SK-N-SH (cell line): ENCODE measurements at regions of chr14 and their contacts with region 1.

Region 1: DNA sequence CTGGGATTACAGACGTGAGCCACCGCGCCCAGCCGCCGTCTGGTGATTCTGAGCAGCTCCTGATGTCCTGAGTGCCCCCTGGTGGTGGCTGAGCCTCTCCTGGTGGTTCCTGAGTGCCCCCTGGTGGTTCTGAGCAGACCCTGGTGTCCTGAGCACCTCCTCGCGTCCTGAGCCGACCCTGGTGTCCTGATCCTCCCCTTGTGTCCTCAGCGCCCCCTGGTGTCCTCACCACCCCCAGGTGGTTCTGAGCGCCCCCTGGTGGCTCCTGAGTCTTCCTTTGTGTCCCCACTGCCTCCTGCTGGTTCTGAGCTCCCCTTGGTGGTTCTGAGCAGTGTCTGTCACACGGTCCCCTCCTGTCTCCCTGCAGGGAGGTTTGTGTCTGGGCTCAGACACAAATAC is 1304.9 kb downstream of the TMEM121 start:
- DNase-seq: peak; percentile 28
- H3K4me3 ChIP-seq: no peak overlapping the region
- H3K27ac ChIP-seq: no peak overlapping the region
- H3K4me1 ChIP-seq: no peaks in the 10 kb centered on the region
- H3K27me3 ChIP-seq: 0 out of 2 replicates have a peak, but pooled peaks cover 5% of the 10 kb centered on the region
- CTCF ChIP-seq: peak; percentile 54
- EP300 ChIP-seq: no peak
- RAD21 ChIP-seq: no peak

Region 2: DNA sequence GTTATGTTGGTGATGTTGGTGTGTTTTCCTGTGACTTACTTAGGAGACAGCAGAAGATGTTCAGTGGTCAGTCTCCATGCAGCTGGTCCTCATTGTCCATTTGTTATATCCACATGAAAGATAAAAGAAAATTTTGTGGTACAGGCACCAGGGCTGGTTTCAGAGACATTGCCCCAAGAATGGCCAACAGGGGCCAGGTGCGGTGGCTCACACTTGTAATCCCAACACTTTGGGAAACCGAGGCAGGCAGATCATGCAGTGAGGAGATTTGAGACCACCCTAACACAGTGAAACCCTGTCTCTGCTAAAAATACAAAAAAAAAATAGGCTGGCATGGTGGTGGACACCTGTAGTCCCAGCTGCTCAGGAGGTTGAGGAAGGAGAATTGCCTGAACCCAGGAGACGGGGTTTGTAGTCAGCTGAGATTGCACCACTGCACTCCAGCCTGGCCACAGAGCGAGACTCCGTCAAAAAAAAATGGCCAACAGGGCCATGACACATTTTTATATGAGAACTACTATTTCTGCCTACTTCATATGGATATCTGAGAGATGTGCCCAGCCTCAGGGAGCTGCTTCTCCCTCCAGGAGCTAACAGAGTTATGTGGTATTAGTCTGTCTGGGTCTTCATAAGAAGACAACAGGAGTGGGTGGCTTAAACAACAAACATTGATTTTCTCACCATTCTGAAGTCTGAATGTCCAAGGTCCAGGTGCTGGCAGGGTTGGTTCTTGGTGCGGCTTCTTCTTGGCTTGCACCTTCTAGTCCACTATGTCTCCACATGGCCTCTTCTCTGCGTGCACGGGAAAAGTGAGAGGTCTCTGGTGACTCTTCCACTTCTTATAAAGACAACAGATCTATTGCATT is 483.2 kb before region 1 on chr14:
- CTCF ChIA-PET with region 1: no interaction called
- POLR2A ChIA-PET with region 1: no interaction called
- DNase-seq: no peak
- H3K4me3 ChIP-seq: no peak overlapping the region
- H3K27ac ChIP-seq: no peak overlapping the region
- H3K4me1 ChIP-seq: no peaks in the 10 kb centered on the region
- H3K27me3 ChIP-seq: no peaks in the 10 kb centered on the region
- CTCF ChIP-seq: no peak
- EP300 ChIP-seq: no peak
- RAD21 ChIP-seq: no peak

Region 3: DNA sequence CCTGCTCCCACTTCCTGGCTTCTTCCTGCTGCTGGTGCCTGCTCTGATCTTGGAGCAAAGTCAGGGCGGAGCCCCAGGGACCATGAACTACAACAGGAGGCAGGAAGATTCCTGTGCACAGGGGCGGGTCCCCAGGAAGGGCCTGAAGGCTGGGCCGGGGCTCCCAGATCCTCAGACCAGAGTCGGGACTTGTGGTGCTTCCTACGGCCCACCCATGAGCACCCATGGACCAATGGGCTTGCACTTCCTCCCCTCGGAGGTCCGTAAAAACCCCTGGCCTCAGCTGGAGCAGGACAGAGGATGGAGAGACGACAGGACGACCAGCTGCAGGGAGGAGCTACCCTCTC is 17.9 kb before region 1 on chr14:
- CTCF ChIA-PET with region 1: interaction called, 11 read pairs
- POLR2A ChIA-PET with region 1: no interaction called
- DNase-seq: no peak
- H3K4me3 ChIP-seq: no peak overlapping the region; a peak in 1 of 4 replicates
- H3K27ac ChIP-seq: no peak overlapping the region
- H3K4me1 ChIP-seq: no peaks in the 10 kb centered on the region
- H3K27me3 ChIP-seq: peaks cover 32% of the 10 kb centered on the region; the same call in 1 of the 2 replicates
- CTCF ChIP-seq: no peak
- EP300 ChIP-seq: no peak
- RAD21 ChIP-seq: no peak

Region 4: GRCh38 chr14:106844608-106845285 is 13.4 kb after region 1 on chr14:
- CTCF ChIA-PET with region 1: interaction called, 14 read pairs
- POLR2A ChIA-PET with region 1: no interaction called
- DNase-seq: peak; percentile 58
- H3K4me3 ChIP-seq: peak overlapping the region; percentile 54 to 61
- H3K27ac ChIP-seq: peak overlapping the region in 1 of 2 experiments; percentile 63; a peak in 2 of 4 replicates
- H3K4me1 ChIP-seq: peaks cover 12 to 24% of the 10 kb centered on the region in 2 experiments; a peak in 3 of 4 replicates
- H3K27me3 ChIP-seq: no peaks in the 10 kb centered on the region
- CTCF ChIP-seq: no peak
- EP300 ChIP-seq: no peak
- RAD21 ChIP-seq: no peak